Caco-2 (cell line): ENCODE measurements at regions of chr1 and their contacts with region 1.

Region 1: DNA sequence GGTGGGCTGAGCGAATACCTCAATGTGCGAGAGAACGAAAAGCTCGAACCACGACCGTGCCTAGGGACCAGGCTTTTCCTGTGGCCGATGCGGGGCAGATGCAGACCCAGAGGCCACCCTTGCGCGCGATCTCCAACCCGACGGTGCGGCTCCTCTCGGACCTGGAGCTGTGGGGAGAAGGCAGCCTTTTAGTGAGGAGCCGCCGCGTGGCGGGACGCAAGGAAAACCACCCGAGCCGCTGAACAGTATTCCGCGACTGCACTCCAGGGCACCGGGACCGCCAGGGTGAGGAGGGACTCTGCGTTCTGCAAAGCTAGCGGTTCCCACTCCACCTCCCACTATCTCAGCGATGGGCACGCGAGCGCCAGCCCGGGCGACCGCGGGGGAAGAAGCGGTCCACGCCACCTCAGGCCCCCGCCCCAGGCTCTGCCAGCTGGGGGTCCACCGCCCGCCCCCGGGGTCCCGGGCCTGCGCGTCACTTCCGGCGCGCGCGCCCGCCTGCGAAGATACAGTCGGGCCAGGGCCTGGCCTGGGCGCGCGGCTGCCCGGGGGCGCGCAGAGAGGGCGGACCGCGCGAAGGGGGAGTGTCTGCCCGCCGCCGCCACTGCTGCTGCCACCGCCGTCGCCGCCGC is 66.5 kb upstream of the PRKACB start:
- DNase-seq: peak; percentile 49 to 67
- H3K4me3 ChIP-seq: peak overlapping the region; percentile 75
- H3K4me3 Mint-ChIP-seq: peak overlapping the region; percentile 81
- H3K27ac Mint-ChIP-seq: no peak overlapping the region
- H3K4me1 ChIP-seq: no peaks in the 10 kb centered on the region
- H3K4me1 Mint-ChIP-seq: no peaks in the 10 kb centered on the region
- H3K27me3 ChIP-seq: no peaks in the 10 kb centered on the region
- H3K27me3 Mint-ChIP-seq: no peaks in the 10 kb centered on the region
- CTCF ChIP-seq: no peak

Region 2: GRCh38 chr1:83998498-83999315 is 78.9 kb before region 1 on chr1 and contains the start of gene TTLL7:
- CTCF ChIA-PET with region 1: no interaction called
- POLR2A ChIA-PET with region 1: no interaction called
- intact Hi-C with region 1: loop called (anchors 2 kb)
- DNase-seq: peak; percentile 71 to 76
- H3K4me3 ChIP-seq: peak within 1 kb of the TSS; percentile 54
- H3K4me3 Mint-ChIP-seq: peak within 1 kb of the TSS; percentile 68
- H3K27ac Mint-ChIP-seq: peak within 1 kb of the TSS; percentile 32
- H3K4me1 ChIP-seq: no peaks in the 10 kb centered on the region
- H3K4me1 Mint-ChIP-seq: no peaks in the 10 kb centered on the region
- H3K27me3 ChIP-seq: no peaks in the 10 kb centered on the region; the same call in 1 of the 2 replicates
- H3K27me3 Mint-ChIP-seq: peaks cover 5% of the 10 kb centered on the region
- CTCF ChIP-seq: no peak
- total RNA-seq, gene TTLL7: 0.56 and 0.75 TPM in 2 replicates

Region 3: GRCh38 chr1:84103197-84103992 is 25.8 kb after region 1 on chr1:
- CTCF ChIA-PET with region 1: no interaction called
- POLR2A ChIA-PET with region 1: no interaction called
- intact Hi-C with region 1: no loop called
- DNase-seq: peak in 1 of 2 experiments; percentile 2
- H3K4me3 ChIP-seq: no peak overlapping the region
- H3K4me3 Mint-ChIP-seq: no peak overlapping the region
- H3K27ac Mint-ChIP-seq: peak overlapping the region; percentile 37
- H3K4me1 ChIP-seq: peaks cover 13% of the 10 kb centered on the region
- H3K4me1 Mint-ChIP-seq: peaks cover 7% of the 10 kb centered on the region
- H3K27me3 ChIP-seq: no peaks in the 10 kb centered on the region
- H3K27me3 Mint-ChIP-seq: no peaks in the 10 kb centered on the region
- CTCF ChIP-seq: no peak